ENCODE measurements at regions of chr20 and their contacts with region 1.

Region 1: GRCh38 chr20:50379049-50379990 is 130.9 kb upstream of the PTPN1 start:
- DNase-seq: peak; percentile 89 to 95 (median 91)
- ATAC-seq: peak; percentile 79 to 91 (median 88)
- H3K4me3 ChIP-seq: peak overlapping the region in 10 of 12 donors; percentile 12 to 45 (median 25)
- H3K27ac ChIP-seq: peak overlapping the region; percentile 76 to 88 (median 82)
- H3K4me1 ChIP-seq: peaks cover 9 to 58% (median 22%) of the 10 kb centered on the region in 12 donors
- H3K27me3 ChIP-seq: no peaks in the 10 kb centered on the region
- CTCF ChIP-seq: no peak
- POLR2A ChIP-seq: peak in 1 of 2 donors; percentile 64

Region 2: GRCh38 chr20:50242853-50243609 is 136.3 kb before region 1 on chr20:
- intact Hi-C with region 1: no loop called
- DNase-seq: no peak
- ATAC-seq: peak in 1 of 4 donors; percentile 36
- H3K4me3 ChIP-seq: no peak overlapping the region
- H3K27ac ChIP-seq: no peak overlapping the region
- H3K4me1 ChIP-seq: no peaks in the 10 kb centered on the region
- H3K27me3 ChIP-seq: peaks cover 0 to 3% (median 0%) of the 10 kb centered on the region in 9 donors
- CTCF ChIP-seq: no peak
- POLR2A ChIP-seq: no peak

Region 3: DNA sequence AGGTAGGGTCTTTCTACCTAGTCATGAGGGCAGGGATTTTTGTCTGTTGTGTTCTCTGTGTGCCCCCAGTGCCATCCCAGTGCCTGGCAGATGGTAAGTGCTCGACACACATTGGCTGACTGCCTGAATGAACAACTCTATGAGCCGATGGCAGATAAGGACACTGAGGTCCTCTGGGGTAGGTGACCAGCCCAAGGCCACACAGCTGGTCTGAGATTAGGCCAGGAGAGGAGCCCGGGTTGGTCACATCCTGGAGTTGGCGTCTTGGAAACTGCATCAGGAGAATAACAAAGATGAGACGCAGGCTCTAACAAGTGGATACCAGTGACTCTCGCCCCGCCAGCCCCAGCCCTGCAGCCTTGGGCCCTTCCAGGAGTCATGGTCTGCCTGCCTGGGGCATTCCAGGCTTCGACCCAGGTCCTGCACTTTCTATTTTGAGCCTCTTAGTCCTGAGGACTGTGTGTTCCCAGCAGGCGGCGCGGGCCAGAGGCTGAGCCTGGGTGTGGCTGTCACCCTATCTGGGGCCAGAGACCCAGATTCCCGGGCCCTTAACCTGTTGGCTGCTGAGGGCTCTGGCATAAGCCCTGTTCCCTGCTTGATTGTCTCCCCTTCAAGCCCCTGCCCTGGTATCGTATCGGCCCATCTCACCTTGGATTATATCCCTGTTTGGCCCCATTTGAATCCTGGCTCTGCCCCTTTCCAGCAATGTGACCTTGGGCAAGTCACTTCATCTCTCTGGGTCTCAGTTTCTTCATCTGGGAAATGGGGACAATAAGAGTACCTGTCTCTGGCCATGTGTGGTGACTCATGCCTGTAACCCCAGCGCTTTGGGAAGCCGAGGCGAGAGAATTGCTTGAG is 100.4 kb before region 1 on chr20:
- intact Hi-C with region 1: loop called in 2 of 10 experiments (anchors 5 kb)
- DNase-seq: peak; percentile 73 to 93 (median 88)
- ATAC-seq: peak; percentile 83 to 91 (median 87)
- H3K4me3 ChIP-seq: peak overlapping the region in 1 of 12 donors; percentile 23
- H3K27ac ChIP-seq: peak overlapping the region; percentile 38 to 94 (median 76)
- H3K4me1 ChIP-seq: peaks cover 0 to 89% (median 17%) of the 10 kb centered on the region in 12 donors
- H3K27me3 ChIP-seq: no peaks in the 10 kb centered on the region
- CTCF ChIP-seq: peak in 11 of 12 donors; percentile 12 to 57 (median 39)
- POLR2A ChIP-seq: no peak

Region 4: DNA sequence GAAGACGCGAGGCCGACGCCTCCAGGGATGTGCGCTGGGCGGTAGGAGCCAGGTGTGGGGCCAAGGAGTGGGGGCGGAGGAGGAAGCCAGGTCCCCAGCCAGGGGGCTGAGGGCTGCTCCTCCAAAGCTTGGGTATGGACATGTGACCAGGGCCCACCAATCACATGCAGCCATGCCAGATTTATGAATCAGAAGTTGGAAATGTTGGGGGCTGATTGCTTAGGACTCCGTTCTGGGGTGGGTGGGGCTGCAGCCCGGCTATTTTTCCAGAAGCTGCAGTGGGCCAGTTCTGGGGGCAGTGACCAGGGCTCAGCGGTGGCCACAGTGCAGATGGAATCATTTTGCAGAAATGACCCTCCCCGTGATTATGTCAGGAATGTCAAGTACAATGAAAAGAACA is 92.7 kb before region 1 on chr20:
- intact Hi-C with region 1: loop called in 1 of 10 experiments (anchors 5 kb)
- DNase-seq: peak in 3 of 5 donors; percentile 57 to 76 (median 58)
- ATAC-seq: peak in 3 of 4 donors; percentile 31 to 76 (median 53)
- H3K4me3 ChIP-seq: peak overlapping the region in 6 of 12 donors; percentile 6 to 44 (median 24)
- H3K27ac ChIP-seq: peak overlapping the region; percentile 48 to 87 (median 78)
- H3K4me1 ChIP-seq: peaks cover 0 to 62% (median 22%) of the 10 kb centered on the region in 12 donors
- H3K27me3 ChIP-seq: no peaks in the 10 kb centered on the region
- CTCF ChIP-seq: no peak
- POLR2A ChIP-seq: no peak

Region 5: DNA sequence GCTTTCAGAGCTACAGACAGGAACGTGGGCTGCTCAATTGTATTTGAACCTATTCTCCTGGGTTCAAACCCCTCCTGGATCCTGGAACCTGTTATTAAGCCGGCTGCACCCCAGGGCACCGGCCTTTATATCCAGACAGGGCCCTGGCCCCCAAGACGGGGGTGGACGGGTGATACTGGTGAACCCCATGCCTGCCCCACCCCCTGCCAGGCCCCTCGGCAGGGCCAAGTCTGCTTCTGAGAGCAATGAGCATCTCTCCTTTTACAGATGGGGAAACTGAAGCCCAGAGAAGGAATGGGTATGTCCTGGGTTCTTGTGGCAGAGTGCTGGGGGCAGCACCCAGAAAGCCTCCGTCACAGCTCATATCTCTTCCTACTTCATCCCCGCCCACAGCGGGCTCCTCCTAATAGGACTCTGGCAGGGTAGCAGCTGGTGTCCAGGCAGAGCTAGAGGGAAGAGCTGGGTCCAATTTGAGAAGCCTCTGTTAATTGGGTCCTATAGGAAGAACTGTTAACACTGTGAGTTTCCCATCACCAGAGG is 82.4 kb before region 1 on chr20:
- intact Hi-C with region 1: loop called in 1 of 10 experiments (anchors 5 kb)
- DNase-seq: peak in 1 of 5 donors; percentile 52
- ATAC-seq: peak in 2 of 4 donors; percentile 11 to 27
- H3K4me3 ChIP-seq: no peak overlapping the region
- H3K27ac ChIP-seq: peak overlapping the region in 6 of 12 donors; percentile 9 to 81 (median 30)
- H3K4me1 ChIP-seq: peaks cover 0 to 55% (median 13%) of the 10 kb centered on the region in 12 donors
- H3K27me3 ChIP-seq: no peaks in the 10 kb centered on the region
- CTCF ChIP-seq: no peak
- POLR2A ChIP-seq: no peak

Region 6: DNA sequence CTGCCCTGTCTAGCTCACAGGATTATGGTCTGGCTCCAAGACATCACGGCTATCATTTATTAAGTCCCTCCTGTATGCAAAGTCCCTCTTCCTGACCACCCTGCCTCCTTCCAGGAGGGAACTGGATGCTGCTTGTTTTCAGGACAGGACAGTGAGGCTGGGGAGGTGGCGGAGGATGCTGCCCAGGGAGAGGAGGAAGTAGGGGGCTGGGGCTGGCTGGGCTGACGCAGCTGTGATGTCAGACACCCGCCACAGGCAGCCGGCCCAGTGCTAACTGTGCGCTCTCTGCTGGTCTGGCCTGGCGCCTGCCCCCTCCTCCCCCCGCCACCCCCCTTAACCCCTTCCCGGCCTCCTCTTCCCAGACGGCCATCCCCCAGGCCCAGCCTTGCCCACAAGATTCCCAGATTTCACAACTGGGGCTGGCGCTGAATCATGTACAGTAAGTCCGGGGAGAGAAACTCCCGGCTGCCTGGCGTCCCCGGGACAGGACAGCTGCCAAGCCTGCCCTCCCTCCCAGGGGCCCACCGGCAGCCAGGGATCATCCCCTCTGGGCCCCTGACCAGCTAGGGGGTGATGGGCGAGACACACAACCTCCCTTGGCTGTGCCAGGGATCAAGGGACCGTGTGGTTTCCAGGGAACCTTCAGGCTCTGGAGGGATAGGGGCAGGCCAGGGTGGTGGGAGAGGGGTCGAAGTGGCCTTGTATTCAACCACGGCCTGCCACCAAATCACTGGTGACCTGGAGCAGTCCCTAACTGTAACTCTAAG is 70.6 kb before region 1 on chr20:
- intact Hi-C with region 1: loop called in 5 of 10 experiments (anchors 2 to 10 kb)
- DNase-seq: peak; percentile 91 to 97 (median 93)
- ATAC-seq: peak; percentile 61 to 92 (median 82)
- H3K4me3 ChIP-seq: peak overlapping the region in 9 of 12 donors; percentile 16 to 50 (median 35)
- H3K27ac ChIP-seq: peak overlapping the region; percentile 62 to 96 (median 91)
- H3K4me1 ChIP-seq: peaks cover 4 to 79% (median 50%) of the 10 kb centered on the region in 12 donors
- H3K27me3 ChIP-seq: no peaks in the 10 kb centered on the region
- CTCF ChIP-seq: peak in 7 of 12 donors; percentile 13 to 45 (median 32)
- POLR2A ChIP-seq: peak in 1 of 2 donors; percentile 40

Region 7: DNA sequence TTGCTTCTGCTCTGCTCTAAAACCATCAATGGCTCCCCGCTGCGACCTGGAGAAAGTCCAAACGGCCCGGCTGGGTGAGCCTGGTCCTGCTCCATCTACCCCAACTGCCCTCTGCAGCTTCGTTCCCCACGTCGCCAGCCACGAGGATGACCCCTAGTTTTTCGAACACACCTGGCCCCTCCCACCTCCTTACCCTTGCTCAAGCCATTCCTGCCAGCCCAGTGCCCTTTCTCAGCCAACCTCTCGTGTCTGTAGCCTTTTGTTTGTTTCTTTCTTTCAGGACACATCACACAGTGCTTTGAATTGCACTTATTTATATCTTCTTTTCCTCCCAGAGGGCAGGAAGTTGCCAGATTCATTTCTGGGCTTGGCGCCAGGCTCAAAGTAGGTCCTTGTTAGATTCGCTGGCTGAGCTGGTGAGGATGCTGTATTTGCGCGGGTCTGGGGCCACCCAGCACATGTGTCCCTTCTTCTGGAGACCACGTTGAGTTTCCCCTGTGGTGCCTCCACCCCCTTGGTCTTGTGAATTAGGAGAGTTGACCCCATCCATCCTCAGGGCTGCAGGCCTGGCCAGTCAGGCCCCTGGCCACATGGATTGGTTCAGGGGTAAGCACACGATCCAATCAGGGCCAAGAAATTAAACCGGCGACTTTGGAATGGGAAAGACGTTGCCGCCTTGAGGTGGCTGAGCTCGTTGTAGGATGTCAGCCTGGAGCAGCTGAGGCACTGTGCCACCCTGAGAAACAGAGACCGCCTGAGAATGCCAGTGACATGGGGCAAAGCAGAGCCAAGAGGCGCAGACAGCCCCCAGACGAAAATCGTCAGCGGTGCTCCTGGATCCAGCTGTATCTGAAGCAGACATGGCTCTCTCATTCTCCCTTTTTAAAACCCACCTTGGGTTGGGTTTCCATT is 32.7 kb before region 1 on chr20:
- intact Hi-C with region 1: loop called in 1 of 10 experiments (anchors 1 kb)
- DNase-seq: peak; percentile 88 to 94 (median 89)
- ATAC-seq: peak; percentile 63 to 85 (median 78)
- H3K4me3 ChIP-seq: peak overlapping the region in 4 of 12 donors; percentile 5 to 44 (median 16)
- H3K27ac ChIP-seq: peak overlapping the region in 11 of 12 donors; percentile 62 to 96 (median 75)
- H3K4me1 ChIP-seq: peaks cover 4 to 72% (median 24%) of the 10 kb centered on the region in 12 donors
- H3K27me3 ChIP-seq: no peaks in the 10 kb centered on the region
- CTCF ChIP-seq: no peak
- POLR2A ChIP-seq: no peak

Region 8: GRCh38 chr20:50415516-50416113 is 36.3 kb after region 1 on chr20:
- intact Hi-C with region 1: loop called in 3 of 10 experiments (anchors 1 kb)
- DNase-seq: peak; percentile 98 to 100 (median 99)
- ATAC-seq: peak; percentile 97 to 99 (median 98)
- H3K4me3 ChIP-seq: peak overlapping the region in 3 of 12 donors; percentile 18 to 28 (median 27)
- H3K27ac ChIP-seq: peak overlapping the region; percentile 88 to 99 (median 96)
- H3K4me1 ChIP-seq: peaks cover 15 to 43% (median 26%) of the 10 kb centered on the region in 12 donors
- H3K27me3 ChIP-seq: no peaks in the 10 kb centered on the region
- CTCF ChIP-seq: no peak
- POLR2A ChIP-seq: peak in 1 of 2 donors; percentile 81